ENCODE measurements at regions of chr11 and their contacts with region 1.

Region 1: GRCh38 chr11:34250732-34251639 is 106.8 kb downstream of the ABTB2 start:
- DNase-seq: peak; percentile 84
- H3K4me3 Mint-ChIP-seq: peak overlapping the region; percentile 20
- H3K27ac Mint-ChIP-seq: no peak overlapping the region
- H3K4me1 Mint-ChIP-seq: peaks cover 52% of the 10 kb centered on the region
- H3K27me3 Mint-ChIP-seq: peaks cover 12% of the 10 kb centered on the region

Region 2: GRCh38 chr11:34114471-34114870 is 136.5 kb before region 1 on chr11:
- CTCF ChIA-PET with region 1: no interaction called
- intact Hi-C with region 1: no loop called
- DNase-seq: no peak
- H3K4me3 Mint-ChIP-seq: no peak overlapping the region
- H3K27ac Mint-ChIP-seq: no peak overlapping the region
- H3K4me1 Mint-ChIP-seq: peaks cover 10% of the 10 kb centered on the region
- H3K27me3 Mint-ChIP-seq: no peaks in the 10 kb centered on the region

Region 3: DNA sequence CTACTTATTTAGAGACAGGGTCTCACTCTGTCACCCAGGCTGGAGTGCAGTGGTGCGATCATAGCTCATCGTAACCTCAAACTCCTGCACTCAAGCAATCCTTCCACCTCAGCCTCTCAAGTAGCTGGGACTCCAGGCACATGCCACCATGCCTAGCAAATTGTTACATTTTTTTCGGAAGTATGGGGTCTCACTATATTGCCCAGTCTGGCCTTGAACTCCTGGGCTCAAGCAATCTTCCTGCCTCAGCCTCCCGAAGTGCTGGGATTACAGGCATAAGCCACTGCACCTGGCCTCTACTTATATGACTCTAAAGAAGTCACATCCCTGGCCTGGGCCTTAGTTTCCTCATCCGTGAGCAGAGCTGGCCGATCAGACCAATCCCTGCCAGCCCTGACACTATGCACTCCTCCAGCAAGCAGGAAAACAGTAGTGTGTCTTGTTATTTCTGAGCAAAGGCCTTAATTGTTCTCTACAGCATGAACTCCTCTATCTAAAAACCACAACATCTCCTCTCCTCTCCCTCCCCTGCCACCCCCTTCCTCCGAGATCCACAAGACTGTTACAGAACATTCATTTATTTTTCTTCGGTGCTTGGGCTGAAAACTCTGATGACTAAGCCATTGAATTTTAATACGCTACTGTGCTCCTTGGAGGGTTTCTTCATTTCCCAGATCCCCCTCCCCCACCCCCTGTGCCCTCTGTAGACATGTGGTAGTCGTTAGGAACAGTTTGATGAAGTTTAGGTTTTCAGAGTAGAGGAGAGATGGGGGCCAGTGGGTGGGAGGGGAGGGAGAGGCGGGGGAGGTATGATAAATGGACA is 15.3 kb after region 1 on chr11:
- CTCF ChIA-PET with region 1: interaction called, 3 read pairs
- intact Hi-C with region 1: loop called (anchors 1 kb)
- DNase-seq: peak; percentile 32
- H3K4me3 Mint-ChIP-seq: no peak overlapping the region
- H3K27ac Mint-ChIP-seq: no peak overlapping the region
- H3K4me1 Mint-ChIP-seq: peaks cover 13% of the 10 kb centered on the region
- H3K27me3 Mint-ChIP-seq: peaks cover 2% of the 10 kb centered on the region

Region 4: GRCh38 chr11:34308913-34309585 is 58.1 kb after region 1 on chr11:
- CTCF ChIA-PET with region 1: no interaction called
- intact Hi-C with region 1: loop called (anchors 2 kb)
- DNase-seq: peak; percentile 10
- H3K4me3 Mint-ChIP-seq: no peak overlapping the region
- H3K27ac Mint-ChIP-seq: no peak overlapping the region
- H3K4me1 Mint-ChIP-seq: peaks cover 35% of the 10 kb centered on the region
- H3K27me3 Mint-ChIP-seq: no peaks in the 10 kb centered on the region